HEK293T (cell line): ENCODE measurements at regions of chr11 and their contacts with region 1.

Region 1: DNA sequence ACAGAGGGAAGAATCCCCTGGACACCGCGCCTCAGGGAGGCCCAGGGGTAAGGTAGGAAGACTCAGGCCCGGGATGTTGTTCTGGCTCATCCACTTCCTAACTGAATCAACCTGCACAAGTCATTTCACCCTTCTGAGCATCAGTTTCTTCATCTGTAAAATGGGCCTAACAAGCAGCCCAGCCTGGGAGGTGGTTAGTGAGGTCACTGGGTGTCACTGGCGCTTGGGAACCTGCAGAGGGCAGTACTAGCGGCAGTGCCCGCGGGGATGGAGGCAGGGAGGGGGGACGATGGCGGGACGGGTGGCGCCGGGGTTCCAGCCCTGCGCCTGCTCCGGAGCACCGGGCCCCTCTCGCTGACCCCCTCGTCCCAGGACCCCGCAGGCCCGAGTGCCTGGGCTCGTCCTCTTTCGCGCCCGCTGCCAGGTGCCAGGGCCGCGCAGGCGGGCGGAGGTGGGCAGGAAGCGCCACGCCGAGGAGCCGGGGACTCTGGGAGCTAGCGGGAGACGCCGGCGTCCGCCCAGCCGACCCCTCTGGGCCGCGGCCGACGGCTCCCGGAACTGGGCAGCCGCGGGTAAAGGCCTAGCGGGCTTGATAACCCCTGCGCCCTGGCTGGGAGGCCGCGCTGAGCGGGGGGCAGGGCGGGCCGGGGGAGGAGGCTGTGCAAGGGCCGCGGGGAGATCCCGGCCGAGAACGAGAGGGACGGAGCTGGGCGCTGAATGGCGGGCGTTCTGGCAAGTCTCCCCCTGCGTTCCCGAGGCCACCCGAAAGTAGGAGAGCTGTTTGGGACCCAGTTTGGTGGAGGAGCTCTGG is at the start of gene NLRX1:
- DNase-seq: peak; percentile 98

Region 2: GRCh38 chr11:119155733-119156492 is 12.8 kb before region 1 on chr11:
- CTCF ChIA-PET with region 1: interaction called, 14 read pairs
- POLR2A ChIA-PET with region 1: interaction called, 5 read pairs
- DNase-seq: no peak